Right cardiac atrium (tissue), 5 donors: ENCODE measurements at regions of chr9 and their contacts with region 1.

Region 1: DNA sequence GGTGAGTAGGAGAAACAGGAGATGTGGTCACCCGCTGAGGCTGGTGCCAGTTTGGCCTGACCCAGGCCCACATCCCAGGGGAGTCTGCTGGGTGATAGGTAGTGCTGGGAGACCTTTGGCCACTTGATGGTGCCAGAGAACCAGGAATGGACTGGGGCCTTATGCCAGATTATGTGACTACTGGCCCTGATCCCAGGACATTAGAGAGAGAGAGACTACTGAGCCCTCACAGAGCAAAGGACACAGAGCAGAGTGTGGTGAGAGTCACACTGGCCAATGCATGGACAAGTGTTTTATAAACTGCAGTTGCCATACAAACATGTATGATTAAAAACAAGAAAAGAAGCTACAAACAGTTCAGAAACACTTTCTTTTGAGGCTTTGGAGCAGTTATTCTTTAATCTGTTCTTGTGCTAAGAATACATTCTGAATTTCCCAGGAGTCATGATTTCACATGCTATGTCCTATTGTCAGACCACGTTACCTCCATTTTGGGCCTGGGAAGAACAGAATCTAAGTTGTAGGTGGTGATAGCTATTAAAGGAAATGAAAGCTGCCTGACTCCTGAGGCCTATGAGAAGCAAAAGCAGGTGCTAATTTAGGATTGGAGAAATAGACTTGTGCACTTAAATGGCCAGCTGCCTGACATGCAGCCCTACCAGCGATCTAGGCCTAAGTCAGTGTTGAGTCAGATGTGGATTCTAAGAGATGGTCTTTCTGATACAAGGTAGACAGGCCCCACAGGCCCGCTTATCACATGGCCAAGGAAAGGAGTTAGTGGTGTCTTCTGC is 32.6 kb upstream of the TMOD1 start:
- DNase-seq: peak; percentile 79 to 88 (median 85)
- ATAC-seq: peak; percentile 95 to 96
- H3K4me3 ChIP-seq: no peak overlapping the region
- H3K27ac ChIP-seq: peak overlapping the region; percentile 25
- H3K4me1 ChIP-seq: no peaks in the 10 kb centered on the region
- H3K27me3 ChIP-seq: no peaks in the 10 kb centered on the region

Region 2: DNA sequence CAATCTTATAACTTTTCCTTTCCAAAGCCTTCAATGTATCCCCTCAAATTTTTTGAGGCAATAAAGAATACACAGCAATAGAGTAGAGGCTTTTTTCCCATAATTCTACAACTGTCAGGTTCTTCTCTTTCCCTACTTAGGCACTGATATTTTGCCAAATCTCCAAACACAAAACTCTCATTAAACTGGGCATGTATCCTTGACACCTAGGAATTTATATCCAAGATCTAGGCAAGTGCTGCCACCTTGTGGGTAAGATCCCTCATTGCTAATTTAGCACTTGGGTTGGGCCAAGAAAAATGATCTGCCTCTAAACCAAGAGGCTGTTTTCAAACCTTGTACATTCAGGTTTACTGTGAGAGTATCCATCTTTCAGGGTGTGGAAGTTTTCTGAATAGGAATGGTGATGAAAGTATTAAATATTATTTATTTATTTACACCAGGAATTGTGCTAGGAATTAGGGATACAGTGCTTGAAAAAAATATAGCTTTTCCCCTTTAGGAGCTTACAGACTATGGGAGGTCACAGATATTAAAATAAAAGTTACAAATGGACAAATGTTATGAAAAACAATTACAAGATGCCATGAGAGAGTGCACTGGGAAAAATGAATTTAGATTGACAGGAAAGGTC is 146.7 kb after region 1 on chr9:
- intact Hi-C with region 1: loop called in 3 of 4 experiments (anchors 5 kb)
- DNase-seq: no peak
- ATAC-seq: peak; percentile 63 to 77
- H3K4me3 ChIP-seq: no peak overlapping the region
- H3K27ac ChIP-seq: no peak overlapping the region
- H3K4me1 ChIP-seq: no peaks in the 10 kb centered on the region
- H3K27me3 ChIP-seq: no peaks in the 10 kb centered on the region

Region 3: DNA sequence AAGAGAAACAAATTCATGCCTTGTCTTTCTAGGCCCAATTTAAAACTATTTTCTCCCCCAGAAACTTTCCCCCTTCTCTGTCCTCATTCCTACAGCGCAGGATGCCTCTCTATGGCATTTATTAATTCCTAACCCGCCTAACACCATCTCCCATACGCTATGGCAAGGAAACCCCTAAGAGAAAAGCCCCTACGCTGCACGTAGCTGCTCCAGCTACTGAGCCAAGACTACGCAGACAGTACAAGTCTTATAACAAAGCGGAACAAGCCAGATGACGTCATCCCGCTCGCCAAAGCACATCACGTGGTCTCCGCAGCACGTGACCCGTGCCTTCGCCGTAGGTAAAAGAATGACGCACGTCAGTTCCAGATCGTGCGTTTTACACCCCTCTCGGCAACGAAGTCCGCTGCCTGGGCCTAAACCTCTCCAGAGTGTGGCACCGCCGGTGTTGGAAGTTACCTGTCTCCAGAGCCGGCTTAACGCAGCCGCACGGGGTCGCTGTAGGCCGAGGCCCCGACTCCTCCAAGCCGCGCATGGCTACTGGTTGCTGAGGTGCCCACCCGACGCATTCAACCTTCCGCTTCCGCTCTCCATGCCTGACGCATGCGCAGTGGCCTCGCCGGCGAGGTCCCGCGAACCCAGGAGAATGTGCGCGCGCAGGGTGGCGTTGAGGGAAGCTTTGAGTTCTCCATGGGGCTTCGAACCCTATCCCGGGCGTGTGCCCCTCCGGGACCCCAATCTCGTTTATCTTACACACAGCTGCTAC is 453.3 kb after region 1 on chr9 and contains the start of gene TRMO:
- intact Hi-C with region 1: no loop called
- DNase-seq: peak; percentile 98 to 99 (median 99)
- ATAC-seq: peak; percentile 96 to 97
- H3K4me3 ChIP-seq: peak within 1 kb of the TSS; percentile 86
- H3K27ac ChIP-seq: peak within 1 kb of the TSS; percentile 98
- H3K4me1 ChIP-seq: no peaks in the 10 kb centered on the region
- H3K27me3 ChIP-seq: no peaks in the 10 kb centered on the region
- total RNA-seq, gene TRMO: 7.7 to 9.5 (median 8.3) TPM